OCI-LY7 (cell line): ENCODE measurements at regions of chr12 and their contacts with region 1.

Region 1: GRCh38 chr12:14384783-14385638 is 19.5 kb downstream of the ATF7IP start:
- DNase-seq: peak; percentile 98
- H3K4me3 ChIP-seq: peak overlapping the region; percentile 85
- H3K27ac ChIP-seq: peak overlapping the region; percentile 86
- H3K4me1 ChIP-seq: peaks cover 39% of the 10 kb centered on the region
- CTCF ChIP-seq: no peak

Region 2: GRCh38 chr12:14272956-14273907 is 111.8 kb before region 1 on chr12:
- CTCF ChIA-PET with region 1: no interaction called
- POLR2A ChIA-PET with region 1: interaction called, 20 read pairs
- intact Hi-C with region 1: no loop called
- DNase-seq: peak; percentile 50
- H3K4me3 ChIP-seq: peak overlapping the region; percentile 16
- H3K27ac ChIP-seq: peak overlapping the region; percentile 51
- H3K4me1 ChIP-seq: peaks cover 49% of the 10 kb centered on the region
- CTCF ChIP-seq: no peak

Region 3: DNA sequence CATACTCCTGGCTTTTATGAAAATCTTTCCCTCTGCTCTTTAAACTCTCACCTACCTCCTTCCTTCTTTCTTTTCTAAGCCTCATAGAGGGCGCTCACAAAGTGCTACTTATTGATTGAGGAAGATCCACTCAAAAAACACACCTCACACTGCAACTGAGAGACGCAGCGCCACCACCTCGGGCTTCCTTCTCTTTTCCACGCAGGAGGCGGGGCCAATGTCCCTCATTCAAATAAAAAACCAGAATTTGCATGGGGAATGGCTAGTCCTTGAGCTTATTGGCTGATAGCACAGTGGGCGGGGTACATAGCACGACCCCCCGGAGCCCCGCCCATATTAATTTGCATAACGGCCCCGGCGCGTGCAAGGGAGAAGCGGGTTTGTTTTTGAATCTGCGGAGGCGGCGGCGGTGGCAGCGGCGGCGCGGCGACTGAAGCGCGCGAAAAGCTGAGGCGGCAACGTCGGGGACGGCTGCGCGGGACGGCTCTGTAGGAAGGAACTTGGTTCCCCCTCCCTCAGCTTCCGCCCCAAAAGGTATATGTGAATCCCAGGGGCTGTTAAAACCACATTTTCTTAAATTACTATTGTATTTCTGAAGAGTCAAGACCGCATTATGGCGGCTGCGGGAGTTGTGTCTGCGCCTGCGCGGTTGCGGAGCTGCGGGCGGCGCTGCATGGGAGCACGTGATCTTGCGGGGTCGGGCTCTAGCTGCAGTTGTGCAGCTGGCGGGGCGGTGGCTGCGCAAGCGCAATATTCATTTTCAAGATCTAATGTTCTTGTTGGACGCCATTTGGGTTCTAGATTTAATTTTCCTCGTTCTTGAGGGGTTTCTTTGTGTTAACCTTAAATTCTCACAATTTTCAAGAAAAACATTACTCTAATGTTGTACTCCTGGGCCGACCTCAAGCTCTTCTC is 19.5 kb before region 1 on chr12 and contains the start of gene ATF7IP:
- CTCF ChIA-PET with region 1: no interaction called
- POLR2A ChIA-PET with region 1: interaction called, 56 read pairs
- intact Hi-C with region 1: loop called (anchors 2 kb)
- DNase-seq: peak; percentile 68
- H3K4me3 ChIP-seq: peak within 1 kb of the TSS; percentile 22
- H3K27ac ChIP-seq: peak within 1 kb of the TSS; percentile 51
- H3K4me1 ChIP-seq: peaks cover 36% of the 10 kb centered on the region
- CTCF ChIP-seq: peak; percentile 75
- total RNA-seq, gene ATF7IP: 55.6 and 69.8 TPM in 2 replicates

Region 4: DNA sequence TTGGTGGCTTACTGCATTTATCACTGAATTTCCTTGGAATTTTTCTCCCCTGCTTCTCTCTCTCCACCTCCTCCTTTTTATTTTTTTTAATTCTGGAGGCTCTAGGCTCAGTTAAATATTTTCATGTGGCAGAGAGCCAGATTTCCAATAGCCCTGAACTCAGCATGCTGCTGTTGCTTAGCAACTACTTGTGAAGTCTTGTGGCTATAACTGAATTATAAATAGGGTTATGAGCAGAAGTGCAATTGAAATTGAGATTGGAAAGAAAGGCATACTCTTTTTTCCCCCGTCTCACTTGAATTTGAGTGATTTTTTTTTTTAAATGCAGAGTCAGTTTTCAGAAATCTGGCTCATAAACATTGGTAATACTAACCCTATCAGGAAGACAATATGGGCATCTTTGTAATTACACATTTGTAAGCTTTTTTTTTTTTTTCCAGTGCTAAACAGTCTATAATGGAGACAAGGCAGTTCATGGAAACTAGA is 18.7 kb after region 1 on chr12:
- CTCF ChIA-PET with region 1: interaction called, 3 read pairs
- POLR2A ChIA-PET with region 1: interaction called, 14 read pairs
- intact Hi-C with region 1: no loop called
- DNase-seq: peak; percentile 52
- H3K4me3 ChIP-seq: peak overlapping the region; percentile 22
- H3K27ac ChIP-seq: peak overlapping the region; percentile 29
- H3K4me1 ChIP-seq: peaks cover 26% of the 10 kb centered on the region
- CTCF ChIP-seq: no peak

Region 5: DNA sequence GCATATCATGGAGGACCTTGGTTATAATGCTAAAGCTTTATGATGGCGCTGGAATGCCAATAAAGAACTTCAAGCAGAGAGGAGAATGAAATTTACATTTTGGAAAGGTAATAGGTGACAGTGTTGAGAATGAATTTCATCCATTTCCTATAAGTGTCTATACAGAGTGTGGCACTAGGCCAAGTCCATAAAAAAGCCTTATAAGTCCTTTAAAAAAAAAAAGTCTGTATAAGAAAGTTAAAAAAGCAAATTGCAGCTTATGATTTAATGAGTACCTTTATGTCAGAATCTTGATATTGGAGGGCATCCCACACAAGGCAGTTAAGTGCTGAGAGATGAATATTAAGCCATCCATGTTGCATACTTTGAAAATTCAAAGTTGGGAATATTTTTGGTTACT is 42.9 kb after region 1 on chr12:
- CTCF ChIA-PET with region 1: no interaction called
- POLR2A ChIA-PET with region 1: no interaction called
- intact Hi-C with region 1: no loop called
- DNase-seq: no peak
- H3K4me3 ChIP-seq: no peak overlapping the region
- H3K27ac ChIP-seq: no peak overlapping the region
- H3K4me1 ChIP-seq: no peaks in the 10 kb centered on the region
- CTCF ChIP-seq: no peak

Region 6: GRCh38 chr12:14810953-14811483 is 426.0 kb after region 1 on chr12:
- CTCF ChIA-PET with region 1: no interaction called
- POLR2A ChIA-PET with region 1: no interaction called
- intact Hi-C with region 1: no loop called
- DNase-seq: peak; percentile 19
- H3K4me3 ChIP-seq: no peak overlapping the region
- H3K27ac ChIP-seq: no peak overlapping the region
- H3K4me1 ChIP-seq: peaks cover 7% of the 10 kb centered on the region
- CTCF ChIP-seq: peak; percentile 72